CD8-positive, alpha-beta T cell (primary cell): ENCODE measurements at regions of chr21 and their contacts with region 1.

Region 1: DNA sequence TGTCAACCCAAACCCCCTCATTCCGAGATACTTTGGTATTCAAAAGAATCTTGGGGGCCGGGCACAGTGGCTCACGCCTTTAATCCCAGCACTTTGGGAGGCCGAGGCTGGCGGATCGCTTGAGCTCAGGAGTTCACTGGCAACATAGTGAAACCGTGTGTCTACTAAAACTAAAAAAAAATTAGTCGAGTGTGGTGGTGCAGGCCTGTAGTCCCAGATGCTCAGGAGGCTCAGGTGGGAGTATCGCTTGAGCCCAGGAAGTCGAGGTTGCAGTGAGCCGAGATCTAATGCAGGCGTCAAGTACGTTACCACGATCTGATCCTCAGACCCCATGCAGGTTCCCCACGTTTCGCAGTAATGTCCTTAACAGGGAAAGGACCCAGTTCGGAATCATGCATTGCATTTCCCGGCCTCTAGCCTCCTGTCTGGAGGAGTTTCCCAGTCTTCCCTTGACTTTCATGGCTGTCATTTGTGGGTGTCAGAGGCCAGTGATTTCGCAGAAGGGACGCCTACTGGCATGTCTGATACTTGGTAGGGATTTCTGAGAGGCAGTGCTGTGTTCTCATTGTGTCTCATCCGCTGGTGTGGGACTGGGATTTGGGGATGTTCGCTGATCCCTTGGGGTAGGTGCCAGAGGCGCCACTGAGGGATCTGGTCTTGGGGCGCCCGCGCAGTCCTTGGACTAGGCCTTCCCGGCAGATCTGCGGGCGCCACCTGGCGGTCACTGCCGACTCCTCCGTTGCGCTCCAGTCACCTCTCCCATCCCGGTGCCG is 39.3 kb upstream of the HMGN1 start:
- DNase-seq: peak; percentile 73 to 95 (median 88)
- ATAC-seq: peak; percentile 74
- H3K4me3 ChIP-seq: peak overlapping the region; percentile 45 to 48
- H3K4me3 Mint-ChIP-seq: peak overlapping the region; percentile 88
- H3K27ac ChIP-seq: peak overlapping the region; percentile 13 to 20
- H3K27ac Mint-ChIP-seq: peak overlapping the region; percentile 89
- H3K4me1 ChIP-seq: peaks cover 21% of the 10 kb centered on the region
- H3K4me1 Mint-ChIP-seq: peaks cover 39% of the 10 kb centered on the region
- H3K27me3 ChIP-seq: no peaks in the 10 kb centered on the region
- H3K27me3 Mint-ChIP-seq: no peaks in the 10 kb centered on the region
- CTCF ChIP-seq: peak; percentile 90

Region 2: DNA sequence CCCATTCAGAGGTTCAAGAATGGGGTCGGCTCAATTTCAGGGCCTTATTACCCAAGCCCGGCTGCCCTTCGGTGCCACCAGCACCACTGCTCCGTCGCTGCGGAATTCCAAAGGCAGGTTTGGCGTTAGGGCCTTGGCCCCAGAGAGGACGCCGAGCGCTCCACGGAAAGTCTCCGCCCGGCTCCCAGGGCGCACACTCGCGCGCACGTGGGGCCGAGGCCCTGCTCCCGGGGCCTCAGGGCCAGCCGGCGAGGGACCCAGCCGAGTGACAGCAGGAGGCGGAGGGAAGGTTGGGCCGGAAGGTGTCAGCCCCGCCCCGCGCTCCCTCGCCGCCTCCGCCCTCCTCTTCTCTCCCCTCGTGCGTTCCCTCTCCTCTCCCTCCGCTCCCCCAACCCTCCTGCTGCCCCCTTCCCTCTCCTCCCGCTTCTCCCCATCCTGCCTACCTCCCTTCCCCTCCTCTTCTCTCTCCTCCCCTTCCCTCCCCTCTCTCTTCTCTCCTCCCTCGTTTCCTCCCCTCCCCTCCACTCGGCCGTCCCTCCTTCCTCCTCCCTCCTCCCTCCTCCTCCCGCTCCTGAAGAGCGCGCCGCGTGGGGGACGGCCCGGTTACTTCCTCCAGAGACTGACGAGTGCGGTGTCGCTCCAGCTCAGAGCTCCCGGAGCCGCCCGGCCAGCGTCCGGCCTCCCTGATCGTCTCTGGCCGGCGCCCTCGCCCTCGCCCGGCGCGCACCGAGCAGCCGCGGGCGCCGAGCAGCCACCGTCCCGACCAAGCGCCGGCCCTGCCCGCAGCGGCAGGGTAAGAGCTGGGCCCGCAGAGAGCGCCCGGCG is 582.7 kb before region 1 on chr21 and contains the start of gene ETS2:
- CTCF ChIA-PET with region 1: no interaction called
- POLR2A ChIA-PET with region 1: no interaction called
- intact Hi-C with region 1: loop called in 1 of 2 experiments (anchors 5 kb)
- DNase-seq: peak; percentile 33 to 84 (median 63)
- ATAC-seq: peak; percentile 83
- H3K4me3 ChIP-seq: peak within 1 kb of the TSS; percentile 74 to 79
- H3K4me3 Mint-ChIP-seq: peak within 1 kb of the TSS; percentile 84
- H3K27ac ChIP-seq: peak within 1 kb of the TSS; percentile 51 to 59
- H3K27ac Mint-ChIP-seq: peak within 1 kb of the TSS; percentile 73
- H3K4me1 ChIP-seq: peaks cover 8% of the 10 kb centered on the region
- H3K4me1 Mint-ChIP-seq: peaks cover 31% of the 10 kb centered on the region
- H3K27me3 ChIP-seq: no peaks in the 10 kb centered on the region
- H3K27me3 Mint-ChIP-seq: peaks cover 2% of the 10 kb centered on the region
- CTCF ChIP-seq: no peak
- total RNA-seq, gene ETS2: 8.1 to 10.0 TPM

Region 3: DNA sequence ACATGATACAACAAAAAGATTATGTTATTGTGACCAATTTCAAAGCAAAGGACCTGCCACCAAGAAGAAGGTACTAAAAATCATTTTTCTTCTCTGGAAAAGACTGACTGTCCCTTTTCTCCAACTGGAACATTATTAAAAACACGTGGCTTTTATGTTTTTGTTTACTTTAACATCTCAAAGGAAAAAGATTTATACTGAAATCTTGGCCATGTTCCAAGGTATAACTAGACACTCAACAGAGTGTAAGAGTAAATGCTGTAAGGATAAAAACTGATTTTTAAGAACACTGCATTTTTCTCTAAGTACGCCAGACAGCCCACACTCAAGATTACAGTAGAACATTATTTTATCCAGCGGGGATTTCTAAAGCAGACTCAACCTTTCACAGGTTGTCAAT is 136.9 kb before region 1 on chr21:
- CTCF ChIA-PET with region 1: no interaction called
- POLR2A ChIA-PET with region 1: no interaction called
- intact Hi-C with region 1: loop called in 1 of 2 experiments (anchors 10 kb)
- DNase-seq: no peak
- ATAC-seq: no peak
- H3K4me3 ChIP-seq: no peak overlapping the region
- H3K4me3 Mint-ChIP-seq: no peak overlapping the region
- H3K27ac ChIP-seq: no peak overlapping the region
- H3K27ac Mint-ChIP-seq: no peak overlapping the region
- H3K4me1 ChIP-seq: no peaks in the 10 kb centered on the region
- H3K4me1 Mint-ChIP-seq: peaks cover 12% of the 10 kb centered on the region
- H3K27me3 ChIP-seq: no peaks in the 10 kb centered on the region
- H3K27me3 Mint-ChIP-seq: no peaks in the 10 kb centered on the region
- CTCF ChIP-seq: no peak

Region 4: DNA sequence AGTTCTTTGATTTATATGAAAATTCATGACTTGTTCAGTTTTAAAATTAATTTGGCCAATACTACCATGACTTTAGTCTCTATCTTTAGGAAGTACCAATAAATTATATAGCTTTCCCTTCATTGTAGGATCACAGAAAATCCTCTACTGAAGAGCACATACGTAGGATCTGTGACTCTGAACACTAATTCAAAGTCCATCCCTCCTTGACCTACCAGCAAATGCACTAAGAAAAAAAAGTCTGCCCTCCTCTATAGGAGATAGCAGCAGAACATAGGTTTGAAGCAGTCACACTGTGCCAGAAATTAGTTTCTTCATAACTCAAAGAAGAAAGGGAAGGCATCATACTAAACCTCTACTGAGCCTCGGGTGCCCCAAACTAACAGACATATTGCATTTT is 91.3 kb before region 1 on chr21:
- CTCF ChIA-PET with region 1: interaction called, 4 read pairs
- POLR2A ChIA-PET with region 1: interaction called, 3 read pairs
- intact Hi-C with region 1: loop called in 1 of 2 experiments (anchors 5 kb)
- DNase-seq: no peak
- ATAC-seq: no peak
- H3K4me3 ChIP-seq: no peak overlapping the region
- H3K4me3 Mint-ChIP-seq: no peak overlapping the region
- H3K27ac ChIP-seq: no peak overlapping the region
- H3K27ac Mint-ChIP-seq: peak overlapping the region; percentile 60
- H3K4me1 ChIP-seq: no peaks in the 10 kb centered on the region
- H3K4me1 Mint-ChIP-seq: peaks cover 43% of the 10 kb centered on the region
- H3K27me3 ChIP-seq: no peaks in the 10 kb centered on the region
- H3K27me3 Mint-ChIP-seq: no peaks in the 10 kb centered on the region
- CTCF ChIP-seq: no peak

Region 5: DNA sequence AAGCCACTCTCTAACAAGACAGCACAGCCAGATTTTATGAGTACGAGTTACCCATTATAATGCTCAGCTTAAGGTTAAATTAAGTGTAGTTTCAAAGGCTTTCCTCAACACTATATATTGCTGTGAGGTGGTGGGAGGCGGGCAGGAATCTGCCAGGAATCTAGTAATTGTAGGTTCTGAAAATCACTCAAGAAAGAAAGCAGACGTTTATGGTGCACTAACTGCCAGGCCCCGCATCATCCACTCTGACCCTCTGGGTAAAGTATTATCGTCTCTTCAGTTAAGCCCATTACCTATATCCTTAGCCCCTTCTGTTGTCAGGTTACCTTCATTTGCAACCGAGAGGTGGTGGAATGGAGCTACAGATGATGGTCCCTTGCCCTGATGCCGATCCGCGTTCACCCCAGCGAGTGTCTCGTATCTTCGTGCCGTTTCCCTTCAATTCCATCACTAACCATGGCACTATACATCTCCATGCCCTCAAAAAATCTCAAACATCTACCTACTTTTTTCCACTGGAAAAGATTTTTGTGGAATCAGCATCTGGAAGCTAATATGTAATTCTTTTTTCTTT is 51.7 kb before region 1 on chr21:
- CTCF ChIA-PET with region 1: no interaction called
- POLR2A ChIA-PET with region 1: no interaction called
- intact Hi-C with region 1: no loop called
- DNase-seq: no peak
- ATAC-seq: no peak
- H3K4me3 ChIP-seq: no peak overlapping the region
- H3K4me3 Mint-ChIP-seq: no peak overlapping the region
- H3K27ac ChIP-seq: no peak overlapping the region
- H3K27ac Mint-ChIP-seq: no peak overlapping the region
- H3K4me1 ChIP-seq: no peaks in the 10 kb centered on the region
- H3K4me1 Mint-ChIP-seq: no peaks in the 10 kb centered on the region
- H3K27me3 ChIP-seq: peaks cover 0 to 2% of the 10 kb centered on the region in 2 experiments
- H3K27me3 Mint-ChIP-seq: no peaks in the 10 kb centered on the region
- CTCF ChIP-seq: no peak

Region 6: DNA sequence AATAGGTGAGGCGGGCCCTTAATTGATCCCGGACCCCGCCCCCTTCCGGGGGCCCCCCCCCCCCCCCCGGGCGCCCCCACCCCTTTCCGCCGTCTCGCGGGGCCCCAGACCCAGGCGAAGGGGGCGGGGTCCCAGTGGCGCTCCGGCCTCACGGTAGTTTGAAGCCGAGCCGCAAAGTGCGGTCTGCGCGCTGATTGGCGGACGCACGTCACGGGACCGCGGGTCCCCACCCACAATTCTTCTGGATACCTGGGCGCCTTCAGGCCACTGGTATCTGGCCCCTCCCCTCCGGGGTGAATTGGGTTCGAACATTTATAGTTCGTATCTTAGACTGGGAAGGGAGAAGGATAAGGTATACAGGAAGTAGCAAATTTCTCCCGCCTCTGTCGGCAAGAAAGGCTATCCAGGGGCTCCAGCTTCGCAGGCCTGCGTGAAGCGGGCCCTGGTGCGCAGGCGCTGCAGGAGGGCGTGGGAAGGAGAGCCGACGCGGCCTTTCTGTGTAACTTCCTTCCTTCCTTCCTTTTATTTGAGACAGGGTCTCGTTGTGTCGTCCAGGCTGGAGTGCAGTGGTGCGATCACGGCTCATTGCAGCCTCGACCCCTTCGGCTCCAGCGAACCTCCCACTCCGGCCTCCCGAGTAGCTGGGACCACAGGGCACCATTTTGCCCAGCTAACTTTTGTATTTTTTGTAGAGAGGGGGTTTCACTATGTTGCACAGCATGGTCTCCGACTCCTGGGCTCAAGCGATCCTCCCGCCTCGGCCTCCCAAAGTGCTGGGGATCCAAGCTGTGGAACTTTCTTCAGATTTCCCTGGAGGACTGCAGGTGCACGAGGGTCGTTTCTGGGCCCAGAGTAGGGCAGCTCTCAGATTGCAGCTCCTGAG is 38.8 kb before region 1 on chr21:
- CTCF ChIA-PET with region 1: interaction called, 4 read pairs
- POLR2A ChIA-PET with region 1: interaction called, 15 read pairs
- intact Hi-C with region 1: loop called (anchors 1 kb)
- DNase-seq: peak; percentile 91 to 98 (median 97)
- ATAC-seq: peak; percentile 83
- H3K4me3 ChIP-seq: peak overlapping the region; percentile 74 to 75
- H3K4me3 Mint-ChIP-seq: peak overlapping the region; percentile 96
- H3K27ac ChIP-seq: peak overlapping the region; percentile 89 to 95
- H3K27ac Mint-ChIP-seq: peak overlapping the region; percentile 99
- H3K4me1 ChIP-seq: peaks cover 42% of the 10 kb centered on the region
- H3K4me1 Mint-ChIP-seq: peaks cover 38% of the 10 kb centered on the region
- H3K27me3 ChIP-seq: no peaks in the 10 kb centered on the region
- H3K27me3 Mint-ChIP-seq: no peaks in the 10 kb centered on the region
- CTCF ChIP-seq: no peak

Region 7: DNA sequence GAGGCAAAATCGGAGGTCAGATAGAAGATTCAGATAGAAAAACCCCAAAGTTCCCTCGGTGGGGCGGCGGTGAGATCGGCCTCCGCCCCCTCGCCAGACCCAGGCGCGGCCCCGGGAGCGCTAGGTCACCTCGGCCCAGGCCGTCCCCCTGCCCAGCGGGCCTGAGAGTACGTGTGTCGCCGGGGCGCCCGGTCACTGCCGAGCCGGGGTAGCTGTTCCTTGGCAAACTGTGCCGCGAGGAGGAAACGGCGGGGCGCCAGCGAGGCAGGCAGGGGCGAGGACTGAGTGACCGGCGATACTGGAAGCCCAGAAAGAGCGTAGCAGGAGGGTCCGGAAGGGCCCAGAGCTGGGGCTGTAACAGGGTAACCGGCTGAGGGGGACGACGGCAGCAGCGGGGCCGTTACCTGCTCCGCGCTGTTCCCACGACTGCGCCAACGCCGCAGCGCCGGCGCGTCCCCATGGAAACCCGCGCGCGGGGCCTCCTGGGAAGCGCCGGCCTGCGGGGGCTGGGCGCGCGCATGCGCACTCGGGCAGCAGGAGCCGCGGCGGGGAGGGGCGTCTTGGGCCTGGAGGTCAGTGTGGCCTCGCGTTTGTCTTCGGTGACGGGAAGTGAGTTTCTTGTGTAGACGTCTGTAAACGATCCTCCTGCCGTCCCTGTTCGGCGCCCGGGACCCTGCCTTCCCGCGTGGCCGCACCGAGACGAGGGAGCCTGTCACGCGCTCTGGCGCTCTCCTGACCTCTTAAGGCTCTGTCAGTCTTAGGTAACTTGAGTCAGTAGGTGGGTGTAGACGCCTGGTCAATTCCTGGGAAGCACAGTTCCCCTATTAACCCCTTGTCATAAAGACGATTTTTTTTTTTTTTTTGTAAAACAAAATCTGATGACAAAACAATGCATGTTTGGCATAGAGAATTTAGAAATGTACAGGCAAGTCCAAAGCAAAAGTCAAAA is 57.4 kb after region 1 on chr21 and contains the start of gene LCA5L:
- CTCF ChIA-PET with region 1: no interaction called
- POLR2A ChIA-PET with region 1: no interaction called
- intact Hi-C with region 1: loop called (anchors 1 to 2 kb)
- DNase-seq: peak; percentile 73 to 95 (median 87)
- ATAC-seq: peak; percentile 88
- H3K4me3 ChIP-seq: peak within 1 kb of the TSS; percentile 74 to 91
- H3K4me3 Mint-ChIP-seq: peak within 1 kb of the TSS; percentile 97
- H3K27ac ChIP-seq: peak within 1 kb of the TSS; percentile 73 to 84
- H3K27ac Mint-ChIP-seq: peak within 1 kb of the TSS; percentile 95
- H3K4me1 ChIP-seq: peaks cover 5% of the 10 kb centered on the region
- H3K4me1 Mint-ChIP-seq: peaks cover 16% of the 10 kb centered on the region
- H3K27me3 ChIP-seq: no peaks in the 10 kb centered on the region
- H3K27me3 Mint-ChIP-seq: peaks cover 9% of the 10 kb centered on the region
- CTCF ChIP-seq: no peak
- total RNA-seq, gene LCA5L: not detected